ENCODE measurements at regions of chr10 and their contacts with region 1.

Region 1: DNA sequence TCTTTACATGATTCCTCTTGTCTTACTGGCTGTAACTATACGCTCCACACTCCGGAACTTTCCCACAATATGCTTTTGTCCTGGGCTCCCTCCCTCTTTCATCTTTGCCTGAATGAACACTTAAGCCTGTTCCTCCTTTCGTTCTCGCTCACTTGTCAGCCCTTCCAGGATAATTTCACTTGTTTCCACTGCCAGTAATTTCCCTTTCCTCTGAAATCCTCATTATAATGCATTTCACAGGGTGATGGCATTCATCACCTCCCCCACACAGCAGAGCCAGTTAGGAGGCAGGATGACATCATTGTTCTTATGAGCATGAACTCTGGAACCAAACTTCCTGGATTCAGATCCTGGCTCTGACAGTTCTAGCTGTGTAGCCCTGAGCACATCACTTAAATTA is 372.6 kb downstream of the GPR158 start:
- DNase-seq: no peak
- H3K4me3 ChIP-seq: no peak overlapping the region
- H3K27ac ChIP-seq: no peak overlapping the region
- H3K4me1 ChIP-seq: no peaks in the 10 kb centered on the region
- H3K27me3 ChIP-seq: no peaks in the 10 kb centered on the region
- CTCF ChIP-seq: no peak
- POLR2A ChIP-seq: no peak

Region 2: DNA sequence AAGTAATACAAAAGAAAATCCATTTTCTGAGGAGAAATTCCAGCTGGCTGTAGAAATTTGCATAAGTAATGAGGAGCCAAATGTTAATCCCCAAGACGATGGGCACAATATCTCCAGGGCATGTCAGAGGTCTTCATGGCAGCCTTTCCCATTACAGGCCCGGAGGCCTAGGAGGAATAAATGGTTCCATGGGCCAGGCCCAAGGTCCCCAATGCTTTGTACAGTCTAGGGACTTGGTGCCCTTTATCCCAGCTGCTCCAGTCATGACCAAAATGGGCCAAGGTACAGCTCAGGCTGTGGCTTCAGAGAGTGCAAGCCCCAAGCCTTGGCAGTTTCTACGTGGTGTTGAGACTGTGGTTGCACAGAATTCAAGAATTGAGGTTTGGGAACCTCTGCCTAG is 190.1 kb before region 1 on chr10:
- intact Hi-C with region 1: loop called (anchors 5 kb)
- DNase-seq: no peak
- H3K4me3 ChIP-seq: no peak overlapping the region
- H3K27ac ChIP-seq: no peak overlapping the region
- H3K4me1 ChIP-seq: no peaks in the 10 kb centered on the region
- H3K27me3 ChIP-seq: no peaks in the 10 kb centered on the region
- CTCF ChIP-seq: no peak
- POLR2A ChIP-seq: no peak

Region 3: GRCh38 chr10:25497246-25497645 is 50.1 kb before region 1 on chr10:
- intact Hi-C with region 1: no loop called
- DNase-seq: no peak
- H3K4me3 ChIP-seq: no peak overlapping the region
- H3K27ac ChIP-seq: no peak overlapping the region
- H3K4me1 ChIP-seq: no peaks in the 10 kb centered on the region
- H3K27me3 ChIP-seq: no peaks in the 10 kb centered on the region
- CTCF ChIP-seq: no peak
- POLR2A ChIP-seq: no peak

Region 4: GRCh38 chr10:25508112-25508815 is 39.1 kb before region 1 on chr10:
- intact Hi-C with region 1: no loop called
- DNase-seq: no peak
- H3K4me3 ChIP-seq: no peak overlapping the region
- H3K27ac ChIP-seq: no peak overlapping the region
- H3K4me1 ChIP-seq: no peaks in the 10 kb centered on the region
- H3K27me3 ChIP-seq: no peaks in the 10 kb centered on the region
- CTCF ChIP-seq: no peak
- POLR2A ChIP-seq: no peak

Measured in breast epithelium (tissue), 4 donors.